A673 (cell line): ENCODE measurements at regions of chr4 and their contacts with region 1.

Region 1: GRCh38 chr4:39763714-39764572 is 66.0 kb downstream of the UBE2K start:
- DNase-seq: no peak
- H3K4me3 ChIP-seq: no peak overlapping the region
- H3K27ac ChIP-seq: no peak overlapping the region
- H3K4me1 ChIP-seq: no peaks in the 10 kb centered on the region
- H3K27me3 ChIP-seq: no peaks in the 10 kb centered on the region
- CTCF ChIP-seq: no peak

Region 2: GRCh38 chr4:39706334-39706733 is 57.6 kb before region 1 on chr4:
- CTCF ChIA-PET with region 1: no interaction called
- POLR2A ChIA-PET with region 1: interaction called, 19 read pairs
- intact Hi-C with region 1: no loop called
- DNase-seq: no peak
- H3K4me3 ChIP-seq: no peak overlapping the region
- H3K27ac ChIP-seq: no peak overlapping the region
- H3K4me1 ChIP-seq: peaks cover 27% of the 10 kb centered on the region
- H3K27me3 ChIP-seq: no peaks in the 10 kb centered on the region
- CTCF ChIP-seq: no peak

Region 3: DNA sequence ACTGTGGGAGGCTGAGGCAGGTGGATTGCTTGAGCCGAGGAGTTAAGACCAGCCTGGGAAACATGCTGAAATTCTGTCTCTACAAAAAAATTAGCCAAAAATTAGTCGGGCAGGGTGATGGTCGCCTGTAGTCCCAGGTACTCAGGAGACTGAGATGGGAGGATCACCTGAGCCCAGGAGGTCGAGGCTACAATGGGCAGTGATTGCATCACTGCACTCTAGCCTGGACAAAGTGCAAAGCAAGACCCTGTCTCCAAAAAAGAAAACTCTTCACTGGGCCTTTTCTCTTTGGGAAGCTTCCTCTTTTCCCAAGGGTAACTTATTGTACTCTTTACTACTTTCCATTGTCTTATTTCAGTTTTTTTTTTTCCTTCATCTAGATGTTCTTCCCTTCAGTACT is 22.9 kb after region 1 on chr4:
- CTCF ChIA-PET with region 1: no interaction called
- POLR2A ChIA-PET with region 1: interaction called, 12 read pairs
- intact Hi-C with region 1: no loop called
- DNase-seq: no peak
- H3K4me3 ChIP-seq: no peak overlapping the region
- H3K27ac ChIP-seq: no peak overlapping the region
- H3K4me1 ChIP-seq: no peaks in the 10 kb centered on the region
- H3K27me3 ChIP-seq: no peaks in the 10 kb centered on the region
- CTCF ChIP-seq: no peak